ENCODE measurements at regions of chr1 and their contacts with region 1.

Region 1: GRCh38 chr1:23496490-23497181 is 12.7 kb upstream of the ASAP3 start:
- DNase-seq: no peak
- H3K4me3 ChIP-seq: no peak overlapping the region
- H3K27ac ChIP-seq: no peak overlapping the region
- H3K4me1 ChIP-seq: no peaks in the 10 kb centered on the region
- H3K27me3 ChIP-seq: no peaks in the 10 kb centered on the region
- CTCF ChIP-seq: no peak
- POLR2A ChIP-seq: no peak

Region 2: DNA sequence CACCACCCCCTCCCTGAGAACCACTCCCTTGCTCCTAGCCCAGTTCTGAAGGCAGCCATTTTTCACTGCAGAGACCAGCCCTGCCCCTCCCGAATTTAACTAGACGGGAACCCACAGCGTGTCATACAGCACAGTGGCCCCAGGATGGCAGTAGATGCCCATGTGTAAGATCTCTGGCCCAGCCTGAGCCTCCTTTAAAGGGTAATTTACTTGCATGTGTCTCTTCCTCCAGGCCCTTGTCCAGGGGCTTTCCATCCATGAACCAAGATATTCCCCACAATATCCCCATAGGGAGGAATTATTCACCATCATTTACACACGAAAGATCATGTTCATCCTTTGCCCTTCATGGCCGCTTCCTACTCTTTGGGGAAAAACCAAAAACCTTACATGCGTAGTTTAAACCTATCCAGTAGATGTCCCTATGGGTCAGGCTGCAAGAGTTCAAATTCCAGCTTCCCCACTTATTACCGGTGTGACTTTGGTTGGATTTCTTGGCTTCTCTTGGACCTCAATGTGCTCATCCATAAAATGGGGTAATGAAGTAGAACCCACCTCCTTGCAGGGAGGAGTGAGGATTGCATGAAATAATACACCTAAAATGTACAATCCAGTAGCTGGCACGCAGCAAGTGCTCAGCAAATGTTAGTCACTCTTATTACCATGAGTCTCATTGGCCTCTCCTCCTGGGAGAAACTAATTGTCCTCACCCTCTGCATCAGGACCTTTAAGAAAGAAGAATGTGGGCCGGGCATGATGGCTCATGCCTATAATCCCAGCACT is 520.0 kb before region 1 on chr1:
- CTCF ChIA-PET with region 1: interaction called, 7 read pairs
- POLR2A ChIA-PET with region 1: no interaction called
- dilution Hi-C with region 1: no loop called
- intact Hi-C with region 1: loop called (anchors 1 kb)
- DNase-seq: peak; percentile 83
- H3K4me3 ChIP-seq: no peak overlapping the region
- H3K27ac ChIP-seq: no peak overlapping the region
- H3K4me1 ChIP-seq: peaks cover 12% of the 10 kb centered on the region
- H3K27me3 ChIP-seq: no peaks in the 10 kb centered on the region
- CTCF ChIP-seq: peak; percentile 81 to 87
- POLR2A ChIP-seq: no peak

Region 3: DNA sequence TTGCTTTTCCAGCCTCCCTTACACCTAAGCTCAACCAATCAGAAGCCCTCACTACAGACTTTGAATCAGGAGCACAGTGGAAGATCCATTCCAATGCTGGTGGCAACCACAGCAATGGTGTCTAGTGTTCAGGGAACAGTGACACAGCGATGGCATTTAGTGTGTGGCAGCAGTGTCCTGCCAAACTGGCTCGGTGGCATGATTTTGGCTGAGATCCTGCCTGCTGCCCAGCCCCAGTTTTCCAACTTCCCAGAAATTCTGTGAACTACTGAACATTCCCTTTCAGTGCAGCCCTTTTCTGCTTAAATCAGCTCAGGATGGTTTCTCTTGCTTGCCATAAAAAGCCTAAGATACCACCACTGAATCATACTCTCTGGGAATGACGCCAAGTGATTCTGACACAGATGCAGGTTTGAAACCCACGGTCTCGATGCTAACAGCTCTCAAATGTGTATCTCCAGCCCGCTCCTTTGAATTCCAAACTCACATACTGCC is 21.5 kb before region 1 on chr1:
- CTCF ChIA-PET with region 1: interaction called, 14 read pairs
- POLR2A ChIA-PET with region 1: no interaction called
- dilution Hi-C with region 1: no loop called
- intact Hi-C with region 1: no loop called
- DNase-seq: peak; percentile 49
- H3K4me3 ChIP-seq: no peak overlapping the region
- H3K27ac ChIP-seq: no peak overlapping the region
- H3K4me1 ChIP-seq: peaks cover 10% of the 10 kb centered on the region
- H3K27me3 ChIP-seq: no peaks in the 10 kb centered on the region
- CTCF ChIP-seq: no peak
- POLR2A ChIP-seq: no peak

Region 4: GRCh38 chr1:23514111-23514679 is 17.6 kb after region 1 on chr1:
- CTCF ChIA-PET with region 1: interaction called, 65 read pairs
- POLR2A ChIA-PET with region 1: interaction called, 3 read pairs
- dilution Hi-C with region 1: no loop called
- intact Hi-C with region 1: no loop called
- DNase-seq: no peak
- H3K4me3 ChIP-seq: no peak overlapping the region
- H3K27ac ChIP-seq: no peak overlapping the region
- H3K4me1 ChIP-seq: no peaks in the 10 kb centered on the region
- H3K27me3 ChIP-seq: no peaks in the 10 kb centered on the region
- CTCF ChIP-seq: no peak
- POLR2A ChIP-seq: no peak

Region 5: DNA sequence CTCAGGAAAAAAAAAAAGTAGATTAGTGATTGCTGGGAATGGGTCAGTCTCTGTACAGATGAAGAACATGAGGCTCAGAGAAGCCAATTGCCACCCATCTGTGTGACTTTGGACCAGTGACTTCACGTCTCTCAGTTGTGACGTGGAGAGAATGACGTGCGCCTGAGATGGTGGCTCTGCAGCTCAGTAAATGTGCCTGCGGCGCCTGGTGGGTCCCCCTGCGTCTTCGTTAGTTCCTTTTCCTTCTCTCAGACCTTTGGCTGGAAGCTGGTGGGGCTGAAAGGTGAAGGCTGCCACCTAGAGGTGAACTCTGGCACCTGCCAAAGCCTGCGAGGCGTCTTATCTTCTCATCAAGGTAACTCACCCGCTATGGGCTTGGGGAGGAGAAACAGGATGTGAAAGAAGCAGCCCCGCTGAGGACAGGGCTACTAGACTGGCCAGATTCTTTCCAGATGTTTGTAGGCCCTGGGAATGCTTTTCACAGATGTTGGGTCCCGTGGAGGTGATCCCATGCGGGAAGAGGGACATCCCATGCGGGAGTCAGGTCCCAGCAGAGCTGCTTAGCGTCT is 43.1 kb after region 1 on chr1:
- CTCF ChIA-PET with region 1: interaction called, 287 read pairs
- POLR2A ChIA-PET with region 1: no interaction called
- dilution Hi-C with region 1: no loop called
- intact Hi-C with region 1: loop called (anchors 1 kb)
- DNase-seq: peak; percentile 93
- H3K4me3 ChIP-seq: no peak overlapping the region
- H3K27ac ChIP-seq: no peak overlapping the region
- H3K4me1 ChIP-seq: peaks cover 8% of the 10 kb centered on the region
- H3K27me3 ChIP-seq: no peaks in the 10 kb centered on the region
- CTCF ChIP-seq: peak; percentile 93
- POLR2A ChIP-seq: no peak

Region 6: GRCh38 chr1:23657659-23658275 is 161.1 kb after region 1 on chr1:
- CTCF ChIA-PET with region 1: interaction called, 11 read pairs
- POLR2A ChIA-PET with region 1: interaction called, 7 read pairs
- dilution Hi-C with region 1: no loop called
- intact Hi-C with region 1: no loop called
- DNase-seq: peak; percentile 42
- H3K4me3 ChIP-seq: no peak overlapping the region
- H3K27ac ChIP-seq: no peak overlapping the region
- H3K4me1 ChIP-seq: no peaks in the 10 kb centered on the region
- H3K27me3 ChIP-seq: peaks cover 0 to 4% of the 10 kb centered on the region in 2 experiments
- CTCF ChIP-seq: peak; percentile 94 to 95
- POLR2A ChIP-seq: no peak

Region 7: GRCh38 chr1:24391882-24392603 is 895.4 kb after region 1 on chr1:
- CTCF ChIA-PET with region 1: no interaction called
- POLR2A ChIA-PET with region 1: no interaction called
- dilution Hi-C with region 1: no loop called
- intact Hi-C with region 1: no loop called
- DNase-seq: peak; percentile 75
- H3K4me3 ChIP-seq: peak overlapping the region in 1 of 3 experiments; percentile 32
- H3K27ac ChIP-seq: peak overlapping the region; percentile 32
- H3K4me1 ChIP-seq: peaks cover 40% of the 10 kb centered on the region
- H3K27me3 ChIP-seq: no peaks in the 10 kb centered on the region
- CTCF ChIP-seq: peak; percentile 91 to 92
- POLR2A ChIP-seq: no peak